ENCODE measurements at regions of chr10 and their contacts with region 1.

Region 1: GRCh38 chr10:116787893-116788665 is 45.7 kb upstream of the HSPA12A start:
- DNase-seq: peak; percentile 69
- ATAC-seq: peak; percentile 94
- H3K4me3 ChIP-seq: peak overlapping the region; percentile 35
- H3K27ac ChIP-seq: no peak overlapping the region
- H3K4me1 ChIP-seq: no peaks in the 10 kb centered on the region
- H3K27me3 ChIP-seq: peaks cover 3% of the 10 kb centered on the region; the same call in 1 of the 2 replicates
- CTCF ChIP-seq: peak; percentile 97
- POLR2A ChIP-seq: no peak
- RAD21 ChIP-seq: peak; percentile 97

Region 2: DNA sequence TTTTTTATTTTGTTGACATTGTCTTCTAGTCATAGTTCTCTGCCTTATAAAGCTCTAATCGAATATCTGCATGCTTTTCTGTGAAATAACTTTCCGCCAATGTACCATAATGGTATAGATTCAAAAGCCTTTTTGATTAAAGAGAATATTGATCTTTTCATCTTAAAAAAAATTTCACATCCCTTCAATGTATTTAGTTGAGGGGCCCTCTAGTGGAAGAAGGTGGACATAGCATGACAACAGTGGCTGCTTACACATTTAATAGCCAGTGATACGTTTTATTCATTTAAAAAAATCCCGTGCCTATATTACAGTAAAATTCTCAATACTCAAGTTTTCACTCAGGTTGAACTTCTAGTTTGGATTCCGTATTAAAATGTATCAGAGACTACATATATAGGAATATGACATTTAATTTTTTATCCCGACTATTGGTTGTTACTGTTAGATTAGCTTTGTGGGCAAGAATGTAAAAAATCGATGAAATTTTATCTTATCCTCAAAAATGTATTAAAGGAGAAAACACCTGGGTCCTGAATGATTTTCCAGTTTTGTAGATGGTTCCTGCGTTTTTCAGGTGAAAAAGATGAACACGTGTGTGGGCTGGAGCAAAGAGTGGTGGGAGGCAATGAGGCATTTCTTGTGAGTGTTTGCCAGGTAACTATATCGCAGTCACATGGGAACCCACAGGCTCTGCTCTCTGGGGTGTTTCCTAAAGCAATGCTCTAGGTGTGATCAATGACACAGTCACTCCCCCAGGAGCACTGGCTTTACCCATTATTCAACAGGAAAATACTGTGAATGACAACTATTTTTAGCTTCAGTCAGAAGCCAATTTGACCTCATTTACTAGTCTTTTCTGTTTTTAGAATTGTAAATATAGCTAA is 266.4 kb before region 1 on chr10:
- CTCF ChIA-PET with region 1: no interaction called
- POLR2A ChIA-PET with region 1: no interaction called
- dilution Hi-C with region 1: no loop called
- in situ Hi-C with region 1: no loop called
- intact Hi-C with region 1: loop called (anchors 5 kb)
- DNase-seq: peak; percentile 52
- ATAC-seq: peak; percentile 75
- H3K4me3 ChIP-seq: no peak overlapping the region
- H3K27ac ChIP-seq: no peak overlapping the region
- H3K4me1 ChIP-seq: no peaks in the 10 kb centered on the region
- H3K27me3 ChIP-seq: no peaks in the 10 kb centered on the region
- CTCF ChIP-seq: peak; percentile 66
- POLR2A ChIP-seq: no peak
- RAD21 ChIP-seq: no peak

Region 3: GRCh38 chr10:116683821-116684220 is 104.3 kb before region 1 on chr10:
- CTCF ChIA-PET with region 1: interaction called, 39 read pairs
- POLR2A ChIA-PET with region 1: no interaction called
- dilution Hi-C with region 1: loop called (anchors 25 kb)
- in situ Hi-C with region 1: loop called (anchors 5 kb)
- intact Hi-C with region 1: loop called (anchors 1 kb)
- DNase-seq: no peak
- ATAC-seq: no peak
- H3K4me3 ChIP-seq: no peak overlapping the region
- H3K27ac ChIP-seq: no peak overlapping the region
- H3K4me1 ChIP-seq: peaks cover 9% of the 10 kb centered on the region
- H3K27me3 ChIP-seq: no peaks in the 10 kb centered on the region
- CTCF ChIP-seq: no peak
- POLR2A ChIP-seq: no peak
- RAD21 ChIP-seq: no peak

Region 4: GRCh38 chr10:116708391-116708821 is 79.7 kb before region 1 on chr10:
- CTCF ChIA-PET with region 1: interaction called, 4 read pairs
- POLR2A ChIA-PET with region 1: no interaction called
- dilution Hi-C with region 1: no loop called
- in situ Hi-C with region 1: no loop called
- intact Hi-C with region 1: loop called (anchors 1 kb)
- DNase-seq: peak; percentile 88
- ATAC-seq: peak; percentile 99
- H3K4me3 ChIP-seq: no peak overlapping the region
- H3K27ac ChIP-seq: no peak overlapping the region
- H3K4me1 ChIP-seq: peaks cover 6% of the 10 kb centered on the region
- H3K27me3 ChIP-seq: no peaks in the 10 kb centered on the region
- CTCF ChIP-seq: no peak
- POLR2A ChIP-seq: no peak
- RAD21 ChIP-seq: peak; percentile 21; the same call in 1 of the 2 replicates

Measured in IMR-90 (cell line).